Left ventricle myocardium inferior (tissue), 1 donor: ENCODE measurements at regions of chr6 and their contacts with region 1.

Region 1: GRCh38 chr6:70884074-70884983 is 72.5 kb downstream of the B3GAT2 start:
- DNase-seq: peak; percentile 28
- H3K4me3 ChIP-seq: no peak overlapping the region
- H3K27ac ChIP-seq: no peak overlapping the region
- H3K4me1 ChIP-seq: no peaks in the 10 kb centered on the region
- H3K27me3 ChIP-seq: peaks cover 12% of the 10 kb centered on the region
- CTCF ChIP-seq: peak; percentile 96

Region 2: DNA sequence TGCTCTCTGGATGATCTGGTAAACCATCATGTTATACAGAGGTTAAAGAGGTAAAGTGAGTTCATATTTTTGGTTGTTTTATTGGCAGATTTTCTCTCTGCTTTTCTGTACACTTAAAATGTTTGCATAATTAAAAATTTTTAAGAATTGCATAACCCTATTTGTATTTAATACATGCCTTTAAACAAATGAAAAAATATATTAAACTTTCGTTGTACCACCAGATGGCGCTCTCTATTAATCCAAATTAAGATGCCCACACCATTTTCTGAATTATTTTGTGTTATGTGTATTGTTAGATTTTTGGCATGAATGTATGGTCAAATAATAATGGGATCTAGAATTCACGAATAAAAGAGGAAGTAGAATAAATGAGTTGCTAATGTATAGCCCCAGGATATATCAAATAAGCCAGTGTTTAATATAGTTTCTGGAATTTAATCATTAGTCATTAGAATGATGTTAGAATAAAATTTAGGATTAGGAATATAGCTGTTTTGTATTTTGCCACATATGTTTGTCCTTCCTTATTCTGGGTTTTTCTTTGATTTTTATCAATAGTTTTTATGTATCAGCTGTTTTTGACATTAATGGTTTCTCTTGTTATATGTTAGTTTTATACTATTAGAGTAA is 177.7 kb before region 1 on chr6:
- intact Hi-C with region 1: loop called (anchors 5 kb)
- DNase-seq: no peak
- H3K4me3 ChIP-seq: no peak overlapping the region
- H3K27ac ChIP-seq: no peak overlapping the region
- H3K4me1 ChIP-seq: peaks cover 42% of the 10 kb centered on the region
- H3K27me3 ChIP-seq: no peaks in the 10 kb centered on the region
- CTCF ChIP-seq: peak; percentile 73

Region 3: GRCh38 chr6:71091173-71091572 is 206.8 kb after region 1 on chr6:
- intact Hi-C with region 1: no loop called
- DNase-seq: no peak
- H3K4me3 ChIP-seq: no peak overlapping the region
- H3K27ac ChIP-seq: no peak overlapping the region
- H3K4me1 ChIP-seq: no peaks in the 10 kb centered on the region
- H3K27me3 ChIP-seq: no peaks in the 10 kb centered on the region
- CTCF ChIP-seq: no peak